ENCODE measurements at regions of chr22 and their contacts with region 1.

Region 1: DNA sequence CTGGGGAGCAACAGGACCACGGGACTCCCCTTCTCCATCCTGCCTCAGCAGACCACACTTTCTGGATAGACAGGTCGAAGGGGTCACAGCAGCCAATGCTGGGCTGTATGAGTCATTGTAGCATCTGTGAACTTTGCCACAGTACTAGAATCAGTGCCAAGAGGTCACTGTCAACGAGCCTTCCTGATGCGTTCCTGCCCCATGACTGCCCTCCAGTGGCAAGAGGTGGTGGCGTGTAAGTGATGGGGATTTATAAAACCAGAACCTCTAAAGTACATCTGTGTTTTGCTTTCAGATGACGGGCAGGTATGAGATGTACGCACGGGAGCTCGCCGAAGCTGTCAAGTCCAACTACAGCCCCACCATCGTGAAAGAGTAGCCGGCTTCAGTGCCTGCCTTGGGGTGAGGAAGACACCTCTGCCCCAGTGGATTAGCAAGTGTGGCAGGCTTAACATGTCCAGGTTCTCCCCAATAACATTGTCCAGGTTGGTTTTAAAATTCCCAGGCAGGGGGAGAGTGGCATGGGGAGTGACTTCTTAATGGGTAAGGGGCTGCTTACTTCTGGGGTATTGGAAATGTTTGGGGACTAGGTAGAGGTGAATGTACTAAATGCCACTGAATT is 29.4 kb downstream of the GUCD1 start:
- DNase-seq: peak; percentile 86
- ATAC-seq: peak; percentile 93
- H3K4me3 ChIP-seq: no peak overlapping the region
- H3K4me3 Mint-ChIP-seq: no peak overlapping the region
- H3K27ac ChIP-seq: no peak overlapping the region
- H3K27ac Mint-ChIP-seq: peak overlapping the region; percentile 16
- H3K4me1 ChIP-seq: peaks cover 12 to 16% of the 10 kb centered on the region in 2 donors
- H3K4me1 Mint-ChIP-seq: peaks cover 17% of the 10 kb centered on the region
- H3K27me3 ChIP-seq: no peaks in the 10 kb centered on the region
- H3K27me3 Mint-ChIP-seq: no peaks in the 10 kb centered on the region
- CTCF ChIP-seq: peak; percentile 84

Region 2: GRCh38 chr22:24325105-24325757 is 200.3 kb before region 1 on chr22:
- CTCF ChIA-PET with region 1: interaction called, 36 read pairs
- POLR2A ChIA-PET with region 1: no interaction called
- intact Hi-C with region 1: loop called (anchors 1 kb)
- DNase-seq: peak; percentile 71
- ATAC-seq: peak; percentile 76
- H3K4me3 ChIP-seq: no peak overlapping the region
- H3K4me3 Mint-ChIP-seq: no peak overlapping the region
- H3K27ac ChIP-seq: no peak overlapping the region
- H3K27ac Mint-ChIP-seq: peak overlapping the region; percentile 26
- H3K4me1 ChIP-seq: peaks cover 7 to 8% of the 10 kb centered on the region in 2 donors
- H3K4me1 Mint-ChIP-seq: peaks cover 19% of the 10 kb centered on the region
- H3K27me3 ChIP-seq: no peaks in the 10 kb centered on the region
- H3K27me3 Mint-ChIP-seq: no peaks in the 10 kb centered on the region
- CTCF ChIP-seq: peak; percentile 85

Region 3: DNA sequence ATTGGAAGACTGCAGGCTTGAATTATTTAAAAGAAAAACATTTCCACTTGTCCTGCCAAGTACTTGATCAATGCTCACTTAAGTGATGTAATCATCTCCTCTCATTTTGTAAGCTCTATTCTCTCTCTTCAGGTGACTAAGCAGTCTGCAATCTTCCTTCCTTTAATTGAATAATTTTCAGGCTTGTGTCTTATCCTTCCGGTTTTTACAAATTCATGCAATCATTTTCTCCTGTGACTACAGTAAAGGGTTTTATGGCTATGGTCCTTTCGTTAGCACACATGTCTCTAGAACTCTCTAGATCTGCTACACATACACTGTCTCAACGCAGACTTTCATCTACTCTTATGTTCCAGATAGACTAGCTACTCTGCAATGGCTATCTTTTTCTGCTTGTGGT is 43.0 kb before region 1 on chr22:
- CTCF ChIA-PET with region 1: interaction called, 4 read pairs
- POLR2A ChIA-PET with region 1: interaction called, 3 read pairs
- intact Hi-C with region 1: loop called (anchors 5 kb)
- DNase-seq: no peak
- ATAC-seq: no peak
- H3K4me3 ChIP-seq: no peak overlapping the region
- H3K4me3 Mint-ChIP-seq: no peak overlapping the region
- H3K27ac ChIP-seq: no peak overlapping the region
- H3K27ac Mint-ChIP-seq: no peak overlapping the region
- H3K4me1 ChIP-seq: no peaks in the 10 kb centered on the region
- H3K4me1 Mint-ChIP-seq: peaks cover 10% of the 10 kb centered on the region
- H3K27me3 ChIP-seq: no peaks in the 10 kb centered on the region
- H3K27me3 Mint-ChIP-seq: peaks cover 5% of the 10 kb centered on the region
- CTCF ChIP-seq: no peak

Region 4: DNA sequence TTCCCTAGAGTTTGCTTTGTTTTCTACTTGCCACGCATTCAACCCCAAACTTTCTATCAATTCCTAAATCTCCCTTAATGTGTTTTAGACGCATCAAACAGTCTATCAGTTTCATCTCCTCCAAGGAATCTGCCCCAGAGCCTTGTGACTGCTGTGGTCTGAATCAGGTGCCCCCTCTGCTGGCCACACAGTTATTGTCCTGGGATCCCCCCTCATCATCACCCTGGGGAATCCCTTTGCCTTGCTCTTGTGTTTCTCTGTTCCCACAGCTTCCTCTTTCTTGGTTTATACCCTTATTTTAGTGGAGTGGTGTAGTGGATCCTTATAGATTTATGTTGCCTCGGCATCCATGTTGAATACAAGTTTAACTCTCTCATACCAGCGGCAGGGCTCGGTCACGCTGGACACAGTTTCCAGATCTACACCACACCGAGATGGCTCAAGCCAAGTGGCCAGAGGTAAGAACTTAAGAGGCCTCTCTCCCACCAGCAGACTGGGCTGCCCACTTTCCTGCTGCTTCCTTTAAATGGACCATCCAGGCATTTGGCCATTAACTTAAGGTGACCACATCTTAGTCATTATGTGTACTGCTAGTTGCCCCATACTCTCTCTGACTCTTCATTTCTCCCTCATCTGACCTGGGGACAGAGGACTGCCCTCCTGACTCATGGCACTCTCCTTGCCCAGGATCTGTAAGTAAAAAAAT is 22.2 kb before region 1 on chr22:
- CTCF ChIA-PET with region 1: interaction called, 46 read pairs
- POLR2A ChIA-PET with region 1: interaction called, 5 read pairs
- intact Hi-C with region 1: no loop called
- DNase-seq: peak; percentile 92
- ATAC-seq: peak; percentile 90
- H3K4me3 ChIP-seq: no peak overlapping the region
- H3K4me3 Mint-ChIP-seq: no peak overlapping the region
- H3K27ac ChIP-seq: peak overlapping the region in 1 of 2 donors; percentile 55
- H3K27ac Mint-ChIP-seq: peak overlapping the region; percentile 27
- H3K4me1 ChIP-seq: peaks cover 27 to 34% of the 10 kb centered on the region in 2 donors
- H3K4me1 Mint-ChIP-seq: peaks cover 43% of the 10 kb centered on the region
- H3K27me3 ChIP-seq: peaks cover 0 to 2% (median 0%) of the 10 kb centered on the region in 4 experiments
- H3K27me3 Mint-ChIP-seq: no peaks in the 10 kb centered on the region
- CTCF ChIP-seq: peak; percentile 75

Region 5: GRCh38 chr22:24510637-24511625 is 14.6 kb before region 1 on chr22:
- CTCF ChIA-PET with region 1: interaction called, 16 read pairs
- POLR2A ChIA-PET with region 1: no interaction called
- intact Hi-C with region 1: no loop called
- DNase-seq: no peak
- ATAC-seq: peak; percentile 29
- H3K4me3 ChIP-seq: no peak overlapping the region
- H3K4me3 Mint-ChIP-seq: peak overlapping the region; percentile 61
- H3K27ac ChIP-seq: no peak overlapping the region
- H3K27ac Mint-ChIP-seq: peak overlapping the region; percentile 69
- H3K4me1 ChIP-seq: peaks cover 36 to 40% of the 10 kb centered on the region in 2 donors
- H3K4me1 Mint-ChIP-seq: peaks cover 63% of the 10 kb centered on the region
- H3K27me3 ChIP-seq: peaks cover 0 to 1% (median under 1%) of the 10 kb centered on the region in 4 experiments
- H3K27me3 Mint-ChIP-seq: no peaks in the 10 kb centered on the region
- CTCF ChIP-seq: no peak

Measured in B cell (primary cell).